ENCODE measurements at regions of chr1 and their contacts with region 1.

Region 1: DNA sequence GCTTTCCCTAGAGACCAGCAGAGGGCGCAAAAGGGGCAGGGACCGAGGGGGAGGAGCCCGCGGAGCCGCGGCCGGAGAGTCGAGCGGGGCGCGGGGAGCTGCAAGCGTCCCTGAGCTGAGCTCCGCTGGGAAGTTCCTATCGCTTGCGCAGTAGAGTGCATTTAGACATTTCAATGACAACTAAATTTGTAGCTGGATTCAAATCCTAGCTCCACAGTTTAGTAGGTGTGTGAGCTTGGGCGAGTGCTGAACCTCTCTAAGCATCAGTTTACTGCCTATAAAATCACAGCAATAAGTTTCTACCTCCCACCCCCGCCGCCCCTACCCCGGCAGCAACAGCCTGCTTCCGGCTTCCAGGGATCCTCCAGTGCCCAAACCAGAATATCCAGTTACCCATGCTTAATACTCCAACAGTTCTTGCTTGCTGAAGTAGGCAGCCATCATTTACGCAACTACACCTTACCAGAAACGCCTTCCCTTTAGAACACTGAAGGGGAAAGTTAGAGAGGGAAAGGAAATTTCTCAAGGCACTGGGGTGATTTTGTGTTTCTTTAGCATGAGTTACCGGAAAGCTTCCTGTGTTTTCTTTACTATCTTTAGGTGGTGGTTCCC is 9.1 kb downstream of the TLR5 start:
- DNase-seq: peak in 1 of 2 donors; percentile 92
- H3K4me3 ChIP-seq: peak overlapping the region; percentile 48 to 56
- H3K27ac ChIP-seq: peak overlapping the region; percentile 60 to 64
- H3K4me1 ChIP-seq: peaks cover 7 to 12% of the 10 kb centered on the region in 2 donors
- H3K27me3 ChIP-seq: no peaks in the 10 kb centered on the region
- CTCF ChIP-seq: peak; percentile 84 to 97 (median 97)

Region 2: GRCh38 chr1:223363856-223364684 is 230.1 kb after region 1 on chr1 and contains the start of gene SUSD4:
- intact Hi-C with region 1: loop called (anchors 10 kb)
- DNase-seq: peak in 1 of 2 donors; percentile 66
- H3K4me3 ChIP-seq: peak within 1 kb of the TSS; percentile 64 to 70
- H3K27ac ChIP-seq: no peak within 1 kb of the TSS
- H3K4me1 ChIP-seq: peaks cover 9 to 12% of the 10 kb centered on the region in 2 donors
- H3K27me3 ChIP-seq: no peaks in the 10 kb centered on the region
- CTCF ChIP-seq: no peak
- total RNA-seq, gene SUSD4: not detected

Region 3: DNA sequence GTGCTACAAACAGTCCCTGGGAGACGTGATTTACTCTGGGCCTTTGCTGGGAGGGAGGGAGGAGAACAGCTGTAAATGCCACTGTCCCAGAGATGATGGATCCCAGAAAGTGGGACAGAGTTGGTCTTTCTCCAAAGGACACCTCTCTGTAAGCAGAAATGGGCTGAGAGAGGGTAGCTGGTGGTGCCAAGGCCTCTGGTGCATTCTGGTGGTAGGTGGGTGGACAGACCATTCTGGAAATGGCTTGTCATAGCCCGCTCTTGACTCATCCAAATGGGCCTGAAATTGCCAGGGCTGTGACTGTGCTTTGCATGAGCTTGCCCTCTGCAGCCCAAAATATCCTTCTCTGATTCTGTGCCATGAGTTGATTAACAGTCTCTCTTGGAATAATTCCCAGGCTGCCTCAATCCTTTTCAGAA is 295.4 kb after region 1 on chr1:
- intact Hi-C with region 1: loop called (anchors 5 kb)
- DNase-seq: peak; percentile 23 to 84
- H3K4me3 ChIP-seq: no peak overlapping the region
- H3K27ac ChIP-seq: peak overlapping the region; percentile 60 to 75
- H3K4me1 ChIP-seq: peaks cover 15 to 36% of the 10 kb centered on the region in 2 donors
- H3K27me3 ChIP-seq: no peaks in the 10 kb centered on the region
- CTCF ChIP-seq: peak in 1 of 3 experiments; percentile 5

Region 4: GRCh38 chr1:223683586-223684487 is 549.9 kb after region 1 on chr1:
- intact Hi-C with region 1: loop called (anchors 1 kb)
- DNase-seq: no peak
- H3K4me3 ChIP-seq: no peak overlapping the region
- H3K27ac ChIP-seq: no peak overlapping the region
- H3K4me1 ChIP-seq: no peaks in the 10 kb centered on the region
- H3K27me3 ChIP-seq: peaks cover 5% of the 10 kb centered on the region
- CTCF ChIP-seq: peak in 2 of 3 experiments; percentile 41 to 56

Measured in ascending aorta (tissue), 2 donors.